HEK293T (cell line): ENCODE measurements at regions of chr17 and their contacts with region 1.

Region 1: GRCh38 chr17:75456417-75457046 is at the start of gene TMEM94:
- DNase-seq: peak; percentile 96

Region 2: DNA sequence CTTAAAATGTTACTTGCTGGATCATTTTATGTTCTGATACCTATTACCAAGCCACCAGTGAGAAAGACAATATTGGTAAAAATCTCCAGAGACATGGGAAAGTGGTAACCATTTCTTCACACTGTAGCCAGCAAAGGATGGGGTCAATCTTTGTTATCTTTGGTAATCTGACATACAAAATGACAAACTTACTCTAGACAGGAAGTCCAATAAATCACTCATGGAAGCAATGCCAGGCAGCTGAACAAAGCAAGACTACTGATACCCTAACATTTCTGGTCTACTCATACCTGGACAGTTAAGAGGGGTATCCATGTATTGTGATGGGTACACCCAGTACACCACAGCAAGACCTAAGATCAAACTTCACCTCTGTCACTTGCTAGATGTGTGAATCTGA is 70.1 kb before region 1 on chr17:
- CTCF ChIA-PET with region 1: no interaction called
- POLR2A ChIA-PET with region 1: no interaction called
- DNase-seq: no peak

Region 3: DNA sequence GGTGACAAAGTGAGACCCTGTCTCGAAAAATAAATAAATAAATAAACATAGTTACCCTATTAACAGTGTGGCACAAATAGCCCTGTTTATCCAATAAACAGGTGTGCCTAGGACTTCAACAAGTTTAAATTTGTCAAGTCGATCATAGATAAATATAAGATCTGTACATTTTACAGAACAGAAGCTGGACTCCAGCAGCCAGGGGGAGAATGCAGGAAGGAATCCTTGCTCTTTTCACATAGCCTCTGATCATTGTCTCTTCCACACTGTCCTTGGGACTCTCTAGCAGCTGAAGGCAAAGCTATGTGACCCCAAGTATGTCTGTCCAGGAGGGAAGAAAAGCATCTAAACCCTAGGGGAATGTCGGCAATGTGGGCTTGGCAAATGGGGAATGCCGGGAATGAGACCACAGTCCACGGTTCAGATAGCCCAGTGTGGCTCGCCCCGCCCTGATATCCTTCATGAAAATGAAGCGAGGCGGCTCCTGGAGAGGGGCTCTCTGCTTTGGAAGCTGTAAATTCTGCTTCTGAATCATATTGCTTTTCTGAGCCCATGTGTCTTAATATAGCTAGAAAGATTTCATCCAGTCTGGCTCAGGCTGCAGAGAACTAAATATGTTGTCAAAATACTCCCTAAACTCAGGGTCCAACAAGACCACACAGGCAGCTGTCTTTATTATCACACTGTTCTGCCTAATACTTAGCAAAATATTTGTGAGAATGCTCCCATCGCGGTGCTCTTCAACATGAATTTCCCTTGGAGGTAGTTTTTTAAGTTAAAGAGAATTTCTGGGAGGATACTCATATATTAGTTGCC is 26.2 kb before region 1 on chr17:
- CTCF ChIA-PET with region 1: interaction called, 6 read pairs
- POLR2A ChIA-PET with region 1: interaction called, 24 read pairs
- DNase-seq: no peak

Region 4: DNA sequence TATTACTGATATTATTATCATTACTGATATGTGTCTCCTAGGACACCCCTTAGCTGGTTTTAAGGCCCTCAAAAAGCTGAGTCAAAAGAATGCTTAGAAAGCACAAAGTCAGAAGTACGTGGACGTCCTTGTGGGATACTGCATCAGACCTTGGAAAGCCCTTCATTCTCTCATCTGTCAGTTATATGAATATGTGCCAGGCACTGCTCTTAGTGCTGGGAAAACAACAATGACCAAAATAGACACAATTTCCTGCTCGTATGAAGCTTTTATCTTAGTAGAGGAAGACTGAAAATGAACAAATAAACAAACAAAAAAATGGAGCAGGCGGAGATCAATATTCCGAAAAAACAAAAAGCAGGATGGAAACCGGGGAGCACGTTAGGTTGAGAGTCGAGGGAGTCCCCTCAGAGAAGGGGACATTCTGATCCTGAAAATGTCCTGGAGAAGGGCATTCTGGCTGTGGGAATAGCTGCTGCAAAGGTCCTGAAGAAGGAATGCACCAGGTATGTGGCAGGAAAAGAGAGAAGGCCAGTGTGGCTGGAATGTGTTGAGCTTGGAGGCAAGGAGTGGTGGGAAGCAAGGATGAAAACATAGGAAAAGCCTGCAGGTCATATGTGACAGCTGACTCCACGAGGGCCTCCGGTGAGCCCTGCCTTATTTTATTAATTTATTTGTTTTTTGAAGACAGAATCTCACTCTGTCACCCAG is 15.6 kb before region 1 on chr17:
- CTCF ChIA-PET with region 1: no interaction called
- POLR2A ChIA-PET with region 1: interaction called, 15 read pairs
- DNase-seq: no peak

Region 5: GRCh38 chr17:75468291-75468754 is 11.8 kb after region 1 on chr17:
- CTCF ChIA-PET with region 1: no interaction called
- POLR2A ChIA-PET with region 1: interaction called, 14 read pairs
- DNase-seq: no peak

Region 6: GRCh38 chr17:75476271-75476671 is 19.7 kb after region 1 on chr17:
- CTCF ChIA-PET with region 1: no interaction called
- POLR2A ChIA-PET with region 1: interaction called, 14 read pairs
- DNase-seq: no peak

Region 7: GRCh38 chr17:75481194-75482068 is 24.9 kb after region 1 on chr17:
- CTCF ChIA-PET with region 1: no interaction called
- POLR2A ChIA-PET with region 1: interaction called, 12 read pairs
- DNase-seq: no peak

Region 8: GRCh38 chr17:75504347-75504964 is 47.9 kb after region 1 on chr17:
- CTCF ChIA-PET with region 1: no interaction called
- POLR2A ChIA-PET with region 1: interaction called, 22 read pairs
- DNase-seq: peak; percentile 67